Activated CD8-positive, alpha-beta T cell treated with anti-CD3 and anti-CD28 coated beads, Interleukin-2, amount 10 ng/mL, durations not matched to agents 7 days and 5 days (primary cell): ENCODE measurements at regions of chr7 and their contacts with region 1.

Region 1: DNA sequence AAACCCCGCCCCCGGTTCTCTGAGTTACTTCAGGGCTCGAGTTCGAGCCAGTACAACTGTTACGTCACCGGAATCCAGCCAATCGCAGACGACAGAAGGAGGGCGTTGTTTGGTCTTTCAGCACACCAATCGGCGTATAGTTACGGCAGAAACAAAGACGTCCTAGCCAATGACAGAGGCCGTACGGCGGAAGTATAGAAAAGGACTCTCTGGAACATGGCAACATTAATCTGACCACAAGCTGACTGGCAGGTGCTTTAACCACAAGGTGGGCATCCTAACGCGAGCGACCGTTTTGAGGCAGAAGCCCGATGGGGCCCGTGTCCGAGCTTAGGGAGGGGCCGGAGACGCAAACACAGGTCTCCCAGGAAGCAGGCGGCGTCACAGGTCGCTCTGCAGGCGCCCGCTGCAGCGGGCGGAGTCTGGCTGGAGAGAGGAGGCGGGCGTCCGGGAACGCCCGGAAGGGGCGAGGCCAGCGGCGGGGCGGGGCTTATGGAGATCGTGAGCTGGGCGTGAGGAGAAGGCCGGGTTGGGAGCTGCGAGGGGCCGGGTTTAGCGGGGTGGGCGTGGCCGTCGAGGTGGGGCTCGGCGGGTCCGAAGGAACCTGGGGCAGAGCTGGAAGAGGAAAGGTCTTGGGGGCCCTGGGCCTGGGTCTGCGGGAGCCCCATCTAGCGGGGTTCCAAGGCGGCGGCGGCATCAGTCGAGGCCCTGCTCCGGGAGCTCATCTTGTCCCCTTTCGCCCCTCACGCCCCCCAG is at the start of gene MOSPD3:
- DNase-seq: peak; percentile 98
- ATAC-seq: peak; percentile 94
- H3K4me3 Mint-ChIP-seq: peak within 1 kb of the TSS; percentile 95
- H3K27ac Mint-ChIP-seq: peak within 1 kb of the TSS; percentile 99
- H3K4me1 Mint-ChIP-seq: peaks cover 30% of the 10 kb centered on the region
- H3K27me3 Mint-ChIP-seq: peaks cover 6% of the 10 kb centered on the region
- total RNA-seq, gene MOSPD3: 42.1 to 43.5 TPM

Region 2: DNA sequence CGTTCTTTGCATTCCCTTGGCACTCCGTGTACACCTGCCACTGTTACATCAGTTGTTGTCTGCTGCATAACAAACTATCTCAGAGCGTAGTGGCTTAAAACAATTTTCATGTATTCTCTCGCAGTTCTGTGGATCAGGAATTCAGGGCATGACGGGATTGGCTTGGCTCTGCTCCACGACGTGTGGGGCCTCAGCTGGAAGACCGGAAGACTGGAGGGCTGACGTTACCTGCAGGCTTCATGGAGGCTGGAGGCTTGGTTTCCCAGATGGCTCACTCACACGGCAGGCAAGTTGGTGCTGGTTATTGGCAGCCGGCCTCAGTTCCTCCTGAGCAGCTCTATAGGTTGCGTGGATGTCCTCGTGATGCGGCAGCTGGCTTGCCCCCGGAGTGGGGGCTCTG is 102.9 kb before region 1 on chr7:
- CTCF ChIA-PET with region 1: no interaction called
- POLR2A ChIA-PET with region 1: no interaction called
- DNase-seq: no peak
- ATAC-seq: no peak
- H3K4me3 Mint-ChIP-seq: no peak overlapping the region
- H3K27ac Mint-ChIP-seq: peak overlapping the region; percentile 20
- H3K4me1 Mint-ChIP-seq: no peaks in the 10 kb centered on the region
- H3K27me3 Mint-ChIP-seq: peaks cover 13% of the 10 kb centered on the region

Region 3: DNA sequence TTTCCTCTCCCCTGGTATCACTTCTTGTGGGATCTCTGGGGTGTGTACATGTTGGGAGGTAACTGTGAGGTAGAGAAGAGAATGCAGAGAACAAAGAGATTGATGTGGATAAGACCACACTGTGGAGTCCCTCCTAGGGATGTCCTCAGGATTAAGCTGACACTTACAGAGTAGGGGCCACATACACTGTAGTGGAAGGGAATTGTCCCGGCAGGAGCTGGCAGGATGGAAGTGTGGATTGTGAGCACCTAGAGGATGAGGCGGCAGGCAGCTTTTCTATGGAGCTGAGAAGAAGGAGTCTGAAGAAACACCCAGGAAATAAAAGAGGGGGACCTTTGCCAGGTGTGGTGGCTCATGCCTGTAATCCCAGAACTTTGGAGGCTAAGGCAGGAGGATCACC is 59.6 kb before region 1 on chr7:
- CTCF ChIA-PET with region 1: no interaction called
- POLR2A ChIA-PET with region 1: no interaction called
- DNase-seq: no peak
- ATAC-seq: no peak
- H3K4me3 Mint-ChIP-seq: no peak overlapping the region
- H3K27ac Mint-ChIP-seq: peak overlapping the region; percentile 27
- H3K4me1 Mint-ChIP-seq: peaks cover 35% of the 10 kb centered on the region
- H3K27me3 Mint-ChIP-seq: no peaks in the 10 kb centered on the region

Region 4: GRCh38 chr7:100626530-100627237 is 14.5 kb after region 1 on chr7:
- CTCF ChIA-PET with region 1: interaction called, 12 read pairs
- POLR2A ChIA-PET with region 1: interaction called, 9 read pairs
- DNase-seq: peak; percentile 95
- ATAC-seq: peak; percentile 96
- H3K4me3 Mint-ChIP-seq: peak overlapping the region; percentile 79
- H3K27ac Mint-ChIP-seq: peak overlapping the region; percentile 90
- H3K4me1 Mint-ChIP-seq: peaks cover 68% of the 10 kb centered on the region
- H3K27me3 Mint-ChIP-seq: no peaks in the 10 kb centered on the region

Region 5: DNA sequence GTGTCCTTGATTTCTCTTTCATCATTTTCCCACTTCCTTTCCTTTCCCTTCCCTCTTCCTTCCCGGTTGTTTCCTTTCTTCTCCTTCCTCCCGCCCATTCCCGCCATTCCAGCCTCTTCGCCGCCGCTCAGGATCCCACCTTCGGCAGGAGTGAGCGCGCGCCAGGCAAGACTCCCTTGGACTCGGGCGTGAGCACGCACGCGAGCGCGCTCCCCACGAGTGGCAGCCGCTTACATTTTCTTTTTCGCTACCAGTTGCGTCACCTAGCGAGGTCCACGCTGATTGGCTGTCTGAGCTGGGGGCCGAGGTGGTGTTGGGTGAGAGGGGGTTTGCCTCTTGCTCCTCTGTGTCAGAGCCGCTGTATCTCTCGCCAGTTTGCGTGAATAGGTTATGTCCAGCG is 133.0 kb after region 1 on chr7:
- CTCF ChIA-PET with region 1: no interaction called
- POLR2A ChIA-PET with region 1: no interaction called
- DNase-seq: peak; percentile 31
- ATAC-seq: peak; percentile 30
- H3K4me3 Mint-ChIP-seq: peak overlapping the region; percentile 58
- H3K27ac Mint-ChIP-seq: no peak overlapping the region
- H3K4me1 Mint-ChIP-seq: peaks cover 4% of the 10 kb centered on the region
- H3K27me3 Mint-ChIP-seq: peaks cover 2% of the 10 kb centered on the region

Region 6: GRCh38 chr7:101126651-101127280 is 514.6 kb after region 1 on chr7 and contains the start of gene SERPINE1:
- CTCF ChIA-PET with region 1: no interaction called
- POLR2A ChIA-PET with region 1: no interaction called
- DNase-seq: peak; percentile 88
- ATAC-seq: peak; percentile 81
- H3K4me3 Mint-ChIP-seq: peak within 1 kb of the TSS; percentile 56
- H3K27ac Mint-ChIP-seq: peak within 1 kb of the TSS; percentile 79
- H3K4me1 Mint-ChIP-seq: peaks cover 60% of the 10 kb centered on the region
- H3K27me3 Mint-ChIP-seq: peaks cover 22% of the 10 kb centered on the region
- total RNA-seq, gene SERPINE1: 0.47 to 0.58 TPM